HCT116 (cell line): ENCODE measurements at regions of chr3 and their contacts with region 1.

Region 1: DNA sequence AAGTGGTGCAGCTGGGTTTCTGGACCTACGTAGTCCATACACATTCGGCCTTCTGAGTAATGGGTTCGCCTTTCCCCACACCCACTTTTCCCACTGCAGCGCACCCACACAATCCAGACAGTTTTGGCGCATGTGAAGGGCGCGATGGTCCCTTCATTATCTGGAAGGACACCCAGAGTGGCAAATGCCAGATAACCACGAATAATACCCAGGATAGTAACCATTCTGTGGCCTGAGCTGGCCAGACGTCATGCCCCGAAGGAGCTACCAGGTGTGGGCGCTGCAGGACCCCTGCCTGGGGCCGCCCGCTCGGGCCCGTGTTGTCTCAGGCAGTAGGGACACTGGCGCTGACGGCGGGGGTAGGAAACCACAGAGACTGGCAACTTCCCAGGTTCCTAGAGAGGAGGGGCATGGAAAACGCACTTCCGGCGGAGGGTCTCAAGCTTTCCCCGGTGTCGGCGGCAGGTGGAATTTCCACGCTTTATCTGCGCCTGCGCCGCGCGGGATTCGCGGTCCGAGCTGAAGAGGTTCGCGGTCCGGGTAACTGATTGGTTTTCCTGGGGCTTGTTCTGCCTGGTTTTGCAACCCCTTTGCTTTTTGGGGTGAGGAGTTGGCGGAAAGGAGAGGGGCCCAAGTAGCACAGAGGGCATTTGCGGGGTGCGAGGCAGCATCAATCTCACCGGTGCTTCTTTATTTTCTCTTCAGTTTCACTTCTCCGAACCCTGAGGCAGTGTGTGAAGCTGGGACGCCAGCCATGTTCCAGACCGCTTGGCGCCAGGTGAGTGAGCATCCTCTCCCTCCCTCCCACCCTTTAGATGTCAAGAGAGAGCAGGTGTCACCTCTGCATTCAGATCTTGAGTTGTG is at the start of gene ZNF620:
- DNase-seq: peak; percentile 76
- ATAC-seq: peak; percentile 88
- H3K4me3 ChIP-seq: peak within 1 kb of the TSS; percentile 79 to 86
- H3K27ac ChIP-seq: peak within 1 kb of the TSS; percentile 73
- H3K4me1 ChIP-seq: peaks cover 11 to 29% of the 10 kb centered on the region in 2 experiments
- H3K27me3 ChIP-seq: no peaks in the 10 kb centered on the region
- CTCF ChIP-seq: peak in 2 of 3 experiments; percentile 42 to 51; a peak in 4 of 6 replicates
- POLR2A ChIP-seq: peak; percentile 82
- RAD21 ChIP-seq: peak; percentile 35; the same call in 1 of the 2 replicates
- total RNA-seq, gene ZNF620: 10.2 TPM

Region 2: DNA sequence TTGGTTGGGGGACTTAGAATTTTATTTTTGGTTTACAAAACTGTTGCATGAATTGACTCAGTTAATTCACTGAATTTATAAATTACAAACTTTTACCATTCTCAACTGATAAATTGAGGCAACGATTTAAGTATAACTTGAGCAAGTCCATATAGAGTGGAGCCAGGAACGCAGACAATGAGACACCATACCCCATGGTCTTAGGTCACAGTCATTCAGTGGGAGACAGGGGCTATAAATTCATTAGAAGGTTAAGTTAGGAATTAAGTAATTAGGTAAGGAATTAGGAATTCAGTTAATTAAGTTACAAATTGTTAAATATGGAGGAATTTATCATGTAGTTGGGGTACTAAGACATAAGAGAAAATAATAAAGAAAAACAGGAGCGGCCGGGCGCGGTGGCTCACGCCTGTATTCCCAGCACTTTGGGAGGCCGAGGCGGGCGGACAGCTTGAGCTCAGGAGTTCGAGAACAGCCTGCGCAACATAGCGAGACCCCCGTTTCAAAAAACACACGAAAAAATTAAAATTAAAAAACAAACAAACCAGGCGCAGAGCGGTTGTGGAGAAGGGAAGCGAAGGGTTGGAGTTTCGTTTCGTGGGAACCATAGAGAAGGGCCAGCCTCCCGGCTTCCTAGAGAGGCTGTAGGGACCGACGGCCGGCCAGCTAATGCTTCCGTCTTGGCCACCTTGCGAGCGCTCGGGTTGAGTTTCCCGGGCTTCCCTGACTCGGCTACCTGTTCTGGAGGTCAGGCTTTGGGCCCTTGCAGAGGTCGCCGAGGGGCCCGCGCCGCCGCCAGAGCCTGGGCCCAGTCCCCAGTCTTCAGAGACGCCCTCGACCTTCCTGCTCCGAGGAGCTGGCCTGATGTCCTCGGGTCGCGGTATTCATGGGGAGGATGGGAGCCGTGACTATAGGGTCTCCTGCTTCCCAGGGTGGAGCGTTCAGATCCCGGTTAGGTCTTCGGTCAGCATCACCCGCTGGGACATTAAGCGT is 29.1 kb before region 1 on chr3 and contains the start of gene ZNF619:
- CTCF ChIA-PET with region 1: no interaction called
- POLR2A ChIA-PET with region 1: interaction called, 7 read pairs
- RAD21 ChIA-PET with region 1: no interaction called
- intact Hi-C with region 1: loop called (anchors 2 kb)
- DNase-seq: peak; percentile 42
- ATAC-seq: peak; percentile 84
- H3K4me3 ChIP-seq: peak within 1 kb of the TSS; percentile 79 to 85
- H3K27ac ChIP-seq: peak within 1 kb of the TSS; percentile 57
- H3K4me1 ChIP-seq: peaks cover 7 to 12% of the 10 kb centered on the region in 2 experiments; a peak in 3 of 4 replicates
- H3K27me3 ChIP-seq: no peaks in the 10 kb centered on the region
- CTCF ChIP-seq: no peak
- POLR2A ChIP-seq: peak; percentile 55
- RAD21 ChIP-seq: no peak
- total RNA-seq, gene ZNF619: 7.3 TPM

Region 3: DNA sequence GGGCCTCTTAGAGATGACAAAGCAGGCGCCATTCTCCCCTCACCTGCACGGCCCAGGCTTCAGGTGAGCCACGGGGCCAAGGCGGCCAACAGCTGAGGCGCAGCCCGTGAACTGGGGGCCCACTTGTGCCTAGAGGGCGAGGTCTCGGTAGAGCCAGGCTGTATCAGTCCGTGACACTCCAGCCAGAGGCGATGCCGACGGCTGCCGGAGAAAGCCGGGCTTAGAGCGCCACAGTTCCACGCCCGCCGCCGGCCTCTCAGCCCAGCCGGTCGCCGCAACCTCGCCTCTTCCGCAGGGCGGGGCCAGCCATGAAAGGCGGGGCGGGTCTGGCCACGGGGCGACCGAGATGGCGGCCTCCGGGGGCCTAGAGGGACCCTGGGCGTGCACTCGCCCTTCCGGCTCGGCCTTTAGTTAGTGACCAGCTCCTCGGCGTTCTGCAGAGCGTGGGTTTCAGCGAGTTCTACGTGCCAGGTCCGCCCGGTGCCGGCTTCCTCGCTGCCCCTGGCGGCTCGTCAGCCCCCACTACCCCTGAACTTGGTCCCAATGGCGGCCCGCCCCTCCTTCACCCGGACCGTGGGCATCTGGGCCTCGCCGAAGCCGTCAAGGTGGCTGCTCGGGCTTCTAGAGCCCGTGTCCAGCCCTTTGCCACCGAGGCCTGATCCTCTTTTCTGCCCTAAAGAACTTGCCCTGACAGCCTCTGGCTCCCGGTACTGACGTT is 18.9 kb after region 1 on chr3 and contains the start of gene ZNF621:
- CTCF ChIA-PET with region 1: interaction called, 5 read pairs
- POLR2A ChIA-PET with region 1: interaction called, 35 read pairs
- RAD21 ChIA-PET with region 1: interaction called, 3 to 4 read pairs
- intact Hi-C with region 1: loop called (anchors 2 kb)
- DNase-seq: peak; percentile 72
- ATAC-seq: peak; percentile 97
- H3K4me3 ChIP-seq: peak within 1 kb of the TSS; percentile 85 to 92
- H3K27ac ChIP-seq: peak within 1 kb of the TSS; percentile 80
- H3K4me1 ChIP-seq: peaks cover 0 to 18% of the 10 kb centered on the region in 2 experiments; a peak in 1 of 4 replicates
- H3K27me3 ChIP-seq: no peaks in the 10 kb centered on the region
- CTCF ChIP-seq: no peak
- POLR2A ChIP-seq: peak; percentile 96
- RAD21 ChIP-seq: no peak
- total RNA-seq, gene ZNF621: 23.5 TPM